Caco-2 (cell line): ENCODE measurements at regions of chr20 and their contacts with region 1.

Region 1: GRCh38 chr20:16580147-16580546 is 6.9 kb upstream of the KIF16B start:
- DNase-seq: peak; percentile 70 to 84
- H3K4me3 ChIP-seq: no peak overlapping the region
- H3K4me3 Mint-ChIP-seq: peak overlapping the region; percentile 13
- H3K27ac Mint-ChIP-seq: no peak overlapping the region
- H3K4me1 ChIP-seq: peaks cover 24% of the 10 kb centered on the region
- H3K4me1 Mint-ChIP-seq: peaks cover 30% of the 10 kb centered on the region
- H3K27me3 ChIP-seq: no peaks in the 10 kb centered on the region
- H3K27me3 Mint-ChIP-seq: no peaks in the 10 kb centered on the region
- CTCF ChIP-seq: no peak

Region 2: DNA sequence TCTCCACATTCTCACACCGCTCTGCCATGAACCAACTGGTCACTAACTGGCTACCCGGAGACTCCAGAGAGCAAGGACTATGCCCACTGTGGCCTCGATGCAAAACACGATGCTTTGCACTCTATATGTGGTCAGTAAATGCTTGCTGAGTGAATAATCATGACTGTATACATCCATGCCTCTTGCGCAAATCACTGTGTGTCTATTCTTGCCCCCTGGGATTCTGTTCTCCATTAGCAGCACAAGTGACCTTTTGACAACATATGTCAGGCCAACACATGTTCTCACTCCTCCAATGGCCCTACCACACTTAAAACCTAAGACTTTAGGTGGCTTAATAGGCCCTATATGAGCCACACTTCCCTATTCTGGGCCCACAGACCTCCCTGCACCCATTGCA is 23.8 kb before region 1 on chr20:
- CTCF ChIA-PET with region 1: no interaction called
- POLR2A ChIA-PET with region 1: no interaction called
- intact Hi-C with region 1: no loop called
- DNase-seq: no peak
- H3K4me3 ChIP-seq: no peak overlapping the region
- H3K4me3 Mint-ChIP-seq: no peak overlapping the region
- H3K27ac Mint-ChIP-seq: no peak overlapping the region
- H3K4me1 ChIP-seq: no peaks in the 10 kb centered on the region
- H3K4me1 Mint-ChIP-seq: no peaks in the 10 kb centered on the region
- H3K27me3 ChIP-seq: no peaks in the 10 kb centered on the region
- H3K27me3 Mint-ChIP-seq: no peaks in the 10 kb centered on the region
- CTCF ChIP-seq: no peak

Region 3: DNA sequence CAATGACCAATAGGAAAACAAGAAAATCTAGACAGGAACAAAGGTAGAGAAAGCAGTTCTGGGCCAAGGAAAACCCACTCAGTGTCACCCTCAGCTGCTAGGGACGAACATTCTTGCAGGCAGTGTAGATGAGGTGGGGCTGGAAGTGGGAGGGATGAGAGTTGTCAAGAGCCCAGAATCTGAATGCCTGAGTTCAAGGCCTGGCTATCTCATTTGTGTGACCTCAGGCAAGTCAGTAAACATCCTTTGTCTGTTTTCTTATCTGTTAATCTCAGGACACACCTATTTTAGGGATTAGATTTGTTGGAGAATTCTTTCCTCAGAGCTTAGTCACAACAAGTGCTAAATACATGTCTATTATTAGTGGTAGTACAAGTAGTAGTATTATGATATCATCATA is 44.0 kb after region 1 on chr20:
- CTCF ChIA-PET with region 1: no interaction called
- POLR2A ChIA-PET with region 1: no interaction called
- intact Hi-C with region 1: loop called (anchors 2 kb)
- DNase-seq: peak; percentile 63 to 70
- H3K4me3 ChIP-seq: no peak overlapping the region
- H3K4me3 Mint-ChIP-seq: no peak overlapping the region
- H3K27ac Mint-ChIP-seq: no peak overlapping the region
- H3K4me1 ChIP-seq: peaks cover 37% of the 10 kb centered on the region
- H3K4me1 Mint-ChIP-seq: peaks cover 37% of the 10 kb centered on the region
- H3K27me3 ChIP-seq: no peaks in the 10 kb centered on the region
- H3K27me3 Mint-ChIP-seq: peaks cover 2% of the 10 kb centered on the region
- CTCF ChIP-seq: no peak